ENCODE measurements at regions of chr6 and their contacts with region 1.

Region 1: GRCh38 chr6:34834789-34835518 is 43.1 kb downstream of the BLTP3A start:
- DNase-seq: no peak
- H3K4me3 ChIP-seq: no peak overlapping the region
- H3K27ac ChIP-seq: no peak overlapping the region
- H3K4me1 ChIP-seq: no peaks in the 10 kb centered on the region
- H3K27me3 ChIP-seq: no peaks in the 10 kb centered on the region
- CTCF ChIP-seq: no peak

Region 2: DNA sequence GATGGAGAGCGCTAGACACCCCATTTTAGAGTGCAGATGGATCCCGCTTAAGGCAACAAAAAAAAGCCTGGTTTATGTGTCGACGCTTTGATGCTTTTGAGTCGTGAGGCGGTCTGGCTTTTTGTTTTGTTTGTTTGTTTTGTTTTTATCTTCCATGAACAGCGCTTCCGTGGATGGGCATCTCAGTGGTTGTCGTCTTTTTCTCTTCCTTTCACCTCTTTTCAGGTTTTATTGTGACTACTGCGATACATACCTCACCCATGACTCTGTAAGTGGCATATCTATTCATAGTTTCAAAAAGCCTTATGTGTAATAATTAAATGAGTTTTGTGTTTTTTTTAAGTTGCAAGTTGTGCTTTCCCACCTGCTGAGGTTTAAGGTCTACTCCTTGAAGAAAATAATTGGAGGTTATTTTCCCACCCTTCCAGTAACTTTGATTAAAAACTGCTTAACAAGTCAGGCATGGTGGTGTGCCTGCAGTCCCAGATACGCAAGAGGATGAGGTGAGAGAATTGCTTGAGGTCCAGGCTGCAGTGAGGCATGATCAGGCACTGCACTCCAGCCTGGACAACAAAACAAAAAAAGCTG is 77.2 kb before region 1 on chr6:
- CTCF ChIA-PET with region 1: no interaction called
- POLR2A ChIA-PET with region 1: interaction called, 11 read pairs
- intact Hi-C with region 1: no loop called
- DNase-seq: no peak
- H3K4me3 ChIP-seq: peak overlapping the region; percentile 77
- H3K27ac ChIP-seq: peak overlapping the region; percentile 88
- H3K4me1 ChIP-seq: peaks cover 9% of the 10 kb centered on the region
- H3K27me3 ChIP-seq: no peaks in the 10 kb centered on the region
- CTCF ChIP-seq: no peak

Measured in A673 (cell line).